ENCODE measurements at regions of chr4 and their contacts with region 1.

Region 1: GRCh38 chr4:186723292-186724057 is at the start of gene FAT1:
- DNase-seq: peak in 6 of 10 donors; percentile 10 to 88 (median 60)

Region 2: DNA sequence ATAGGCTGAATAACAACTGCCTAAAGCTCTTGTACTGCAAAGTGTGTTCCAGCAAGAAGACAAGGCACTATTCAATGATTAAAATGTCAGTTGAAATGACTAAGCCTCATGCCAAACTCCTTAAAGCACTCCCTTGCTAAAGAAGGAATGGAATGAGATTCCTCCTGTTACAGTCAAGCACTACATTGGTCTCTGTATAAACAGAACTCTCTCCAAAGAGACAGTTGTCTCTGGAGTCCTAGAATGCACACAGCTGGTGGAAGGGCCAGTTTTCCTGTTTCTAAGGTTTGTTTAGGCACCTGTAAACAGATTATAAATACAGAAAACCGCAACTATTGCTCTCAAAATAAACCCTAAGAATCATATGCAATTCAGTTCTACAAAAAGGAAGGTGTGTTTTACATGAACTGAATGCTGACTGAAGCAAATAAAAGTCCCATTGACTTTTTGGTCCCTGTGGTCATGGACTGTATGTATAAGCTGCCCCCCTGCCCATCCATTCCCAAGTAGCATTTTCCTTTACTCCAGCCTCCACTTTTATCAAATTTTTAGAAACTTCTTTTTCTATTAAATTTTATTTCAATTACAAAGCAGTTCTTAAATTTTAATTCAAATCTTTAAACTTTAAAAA is 46.8 kb before region 1 on chr4:
- intact Hi-C with region 1: loop called (anchors 5 kb)
- DNase-seq: no peak

Measured in posterior cingulate gyrus (tissue), 11 donors.